ENCODE measurements at regions of chr2 and their contacts with region 1.

Region 1: GRCh38 chr2:241217320-241218031 is 29.0 kb downstream of the ANO7 start:
- DNase-seq: peak; percentile 63
- H3K4me3 ChIP-seq: peak overlapping the region in 2 of 3 experiments; percentile 16 to 40
- H3K27ac ChIP-seq: no peak overlapping the region
- H3K4me1 ChIP-seq: peaks cover 5% of the 10 kb centered on the region
- H3K27me3 ChIP-seq: no peaks in the 10 kb centered on the region
- CTCF ChIP-seq: no peak
- POLR2A ChIP-seq: no peak

Region 2: DNA sequence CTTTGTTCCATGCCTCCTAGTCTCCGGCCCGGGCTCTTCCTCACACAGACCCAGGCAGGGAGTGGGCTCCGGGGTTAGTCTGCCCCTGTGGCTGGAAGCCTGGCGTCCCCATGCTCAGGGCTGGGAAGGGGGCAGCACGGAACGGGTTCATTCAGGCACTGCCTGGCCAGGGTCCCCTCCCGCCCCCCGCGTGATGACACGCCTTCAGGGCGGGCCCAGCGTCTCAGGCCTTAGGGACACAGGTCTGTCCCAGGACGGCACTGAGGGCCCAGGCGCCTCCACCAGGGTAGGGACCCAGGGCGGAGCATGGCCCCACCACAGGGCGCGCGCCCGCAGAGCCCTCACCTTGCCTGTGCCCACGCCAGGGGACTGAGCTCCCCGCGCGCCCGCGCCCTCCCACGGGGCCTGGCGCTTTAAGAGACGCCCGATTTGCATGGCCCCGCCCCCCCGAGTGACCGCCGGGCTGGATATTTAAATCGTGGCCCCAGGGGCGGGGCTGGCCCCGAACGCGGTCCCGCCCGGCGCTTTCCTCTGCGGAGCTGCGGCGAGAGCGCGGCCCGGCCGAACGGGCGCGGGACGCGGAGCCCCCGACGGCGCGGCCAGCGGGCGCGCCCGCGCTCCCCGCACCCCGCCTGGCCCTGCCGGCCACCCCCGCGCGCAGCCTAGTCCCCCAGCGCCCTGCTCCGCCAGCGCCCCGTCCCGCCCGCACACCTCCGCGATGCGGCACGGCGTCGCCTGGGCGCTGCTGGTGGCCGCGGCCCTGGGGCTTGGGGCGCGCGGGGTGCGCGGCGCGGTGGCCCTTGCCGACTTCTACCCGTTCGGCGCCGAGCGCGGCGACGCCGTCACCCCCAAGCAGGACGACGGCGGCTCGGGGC is 219.1 kb before region 1 on chr2 and contains the start of gene SNED1:
- CTCF ChIA-PET with region 1: no interaction called
- POLR2A ChIA-PET with region 1: no interaction called
- dilution Hi-C with region 1: no loop called
- intact Hi-C with region 1: loop called (anchors 10 kb)
- DNase-seq: peak; percentile 93
- H3K4me3 ChIP-seq: peak within 1 kb of the TSS; percentile 42 to 46 (median 42)
- H3K27ac ChIP-seq: peak within 1 kb of the TSS; percentile 80
- H3K4me1 ChIP-seq: peaks cover 12% of the 10 kb centered on the region
- H3K27me3 ChIP-seq: no peaks in the 10 kb centered on the region
- CTCF ChIP-seq: no peak
- POLR2A ChIP-seq: peak; percentile 68
- total RNA-seq, gene SNED1: 17.2 and 22.1 TPM in 2 replicates